PC-3 (cell line): ENCODE measurements at regions of chr22 and their contacts with region 1.

Region 1: GRCh38 chr22:46563381-46564083 is 26.1 kb upstream of the CELSR1 start:
- DNase-seq: peak; percentile 66
- ATAC-seq: peak; percentile 87
- H3K4me3 ChIP-seq: peak overlapping the region; percentile 51; the same call in 1 of the 2 replicates
- H3K27ac ChIP-seq: peak overlapping the region; percentile 41
- H3K4me1 ChIP-seq: peaks cover 16% of the 10 kb centered on the region
- H3K27me3 ChIP-seq: no peaks in the 10 kb centered on the region
- CTCF ChIP-seq: peak; percentile 73

Region 2: GRCh38 chr22:46547883-46548244 is 15.7 kb before region 1 on chr22:
- CTCF ChIA-PET with region 1: interaction called, 12 read pairs
- POLR2A ChIA-PET with region 1: no interaction called
- intact Hi-C with region 1: no loop called
- DNase-seq: peak; percentile 32
- ATAC-seq: peak; percentile 77
- H3K4me3 ChIP-seq: no peak overlapping the region
- H3K27ac ChIP-seq: no peak overlapping the region
- H3K4me1 ChIP-seq: peaks cover 25% of the 10 kb centered on the region; the same call in 1 of the 2 replicates
- H3K27me3 ChIP-seq: no peaks in the 10 kb centered on the region
- CTCF ChIP-seq: no peak

Region 3: GRCh38 chr22:46657996-46658947 is 94.7 kb after region 1 on chr22:
- CTCF ChIA-PET with region 1: no interaction called
- POLR2A ChIA-PET with region 1: no interaction called
- intact Hi-C with region 1: loop called (anchors 5 kb)
- DNase-seq: peak; percentile 76
- ATAC-seq: peak; percentile 72
- H3K4me3 ChIP-seq: no peak overlapping the region
- H3K27ac ChIP-seq: peak overlapping the region; percentile 41; the same call in 1 of the 2 replicates
- H3K4me1 ChIP-seq: peaks cover 31% of the 10 kb centered on the region
- H3K27me3 ChIP-seq: no peaks in the 10 kb centered on the region
- CTCF ChIP-seq: no peak

Region 4: DNA sequence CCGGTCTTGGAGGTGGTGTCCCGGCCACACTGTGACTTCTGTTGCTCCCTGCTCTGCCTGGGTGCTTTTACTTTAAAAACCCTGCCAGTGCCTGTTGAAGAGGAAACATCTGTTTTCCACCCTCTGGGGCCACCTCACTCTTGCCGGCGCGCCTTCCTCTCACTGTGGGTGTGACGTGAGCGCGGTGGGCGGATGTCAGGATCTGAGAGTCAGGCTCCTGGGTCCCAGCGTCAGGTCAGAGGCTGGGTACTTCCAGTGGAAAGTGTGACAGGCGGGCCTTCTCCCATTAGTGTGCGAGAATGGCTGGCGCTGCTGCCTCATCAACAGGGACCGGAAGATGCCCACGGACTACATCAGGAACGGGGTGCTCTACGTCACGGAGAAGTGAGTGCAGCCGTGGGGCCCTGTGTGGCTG is 110.8 kb after region 1 on chr22:
- CTCF ChIA-PET with region 1: interaction called, 13 read pairs
- POLR2A ChIA-PET with region 1: no interaction called
- intact Hi-C with region 1: no loop called
- DNase-seq: no peak
- ATAC-seq: no peak
- H3K4me3 ChIP-seq: no peak overlapping the region
- H3K27ac ChIP-seq: no peak overlapping the region
- H3K4me1 ChIP-seq: no peaks in the 10 kb centered on the region
- H3K27me3 ChIP-seq: no peaks in the 10 kb centered on the region
- CTCF ChIP-seq: no peak

Region 5: DNA sequence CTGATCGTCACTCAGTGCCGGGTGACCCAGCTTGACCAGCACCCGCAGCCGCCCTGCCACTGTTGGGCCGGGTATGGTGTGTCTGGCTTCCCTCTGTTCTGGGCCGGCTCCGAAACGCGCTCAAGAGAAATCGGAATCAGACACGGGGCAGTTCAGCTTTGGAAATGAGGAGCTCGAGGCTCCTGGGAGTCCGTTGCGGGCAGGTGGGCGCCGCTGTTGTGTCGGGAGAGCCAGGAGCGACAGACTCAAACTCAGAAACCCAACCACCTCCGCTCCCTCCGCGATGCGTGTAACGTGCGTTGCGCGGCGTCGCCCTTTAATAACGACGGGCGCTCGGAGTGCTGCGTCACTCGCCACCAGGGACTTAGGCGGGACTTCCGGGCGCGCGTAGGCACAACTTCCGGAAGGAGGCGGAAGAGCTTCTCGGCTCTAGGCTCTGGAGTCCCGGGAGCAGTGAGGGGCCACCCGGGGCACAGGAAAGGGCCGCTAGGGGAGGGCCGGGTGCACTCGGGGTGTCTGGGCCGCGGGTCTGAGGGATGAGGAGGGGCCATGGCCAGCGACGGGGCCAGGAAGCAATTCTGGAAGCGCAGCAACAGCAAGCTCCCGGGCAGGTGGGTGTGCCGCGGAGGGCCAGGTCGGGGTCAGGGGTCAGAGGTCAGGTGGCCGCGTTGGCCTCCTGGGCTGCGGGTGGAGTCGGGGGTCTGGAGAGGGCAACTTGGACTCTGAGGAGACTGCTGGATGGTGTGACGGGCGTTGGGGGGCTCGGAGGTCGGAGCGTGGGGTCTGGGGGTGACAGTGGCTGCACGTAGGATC is 198.9 kb after region 1 on chr22 and contains the start of gene TBC1D22A:
- CTCF ChIA-PET with region 1: interaction called, 3 read pairs
- POLR2A ChIA-PET with region 1: no interaction called
- intact Hi-C with region 1: loop called (anchors 10 kb)
- DNase-seq: peak; percentile 91
- ATAC-seq: peak; percentile 89
- H3K4me3 ChIP-seq: peak within 1 kb of the TSS; percentile 100
- H3K27ac ChIP-seq: peak within 1 kb of the TSS; percentile 80
- H3K4me1 ChIP-seq: peaks cover 19% of the 10 kb centered on the region
- H3K27me3 ChIP-seq: no peaks in the 10 kb centered on the region
- CTCF ChIP-seq: no peak
- total RNA-seq, gene TBC1D22A: 12.2 and 14.3 TPM in 2 replicates